ENCODE measurements at regions of chr12 and their contacts with region 1.

Region 1: GRCh38 chr12:49763006-49763591 is 21.7 kb downstream of the TMBIM6 start:
- DNase-seq: no peak
- ATAC-seq: peak; percentile 58; the same call in 1 of the 2 replicates
- H3K4me3 ChIP-seq: no peak overlapping the region
- H3K27ac ChIP-seq: no peak overlapping the region
- H3K4me1 ChIP-seq: no peaks in the 10 kb centered on the region
- H3K27me3 ChIP-seq: no peaks in the 10 kb centered on the region
- CTCF ChIP-seq: peak; percentile 90

Region 2: DNA sequence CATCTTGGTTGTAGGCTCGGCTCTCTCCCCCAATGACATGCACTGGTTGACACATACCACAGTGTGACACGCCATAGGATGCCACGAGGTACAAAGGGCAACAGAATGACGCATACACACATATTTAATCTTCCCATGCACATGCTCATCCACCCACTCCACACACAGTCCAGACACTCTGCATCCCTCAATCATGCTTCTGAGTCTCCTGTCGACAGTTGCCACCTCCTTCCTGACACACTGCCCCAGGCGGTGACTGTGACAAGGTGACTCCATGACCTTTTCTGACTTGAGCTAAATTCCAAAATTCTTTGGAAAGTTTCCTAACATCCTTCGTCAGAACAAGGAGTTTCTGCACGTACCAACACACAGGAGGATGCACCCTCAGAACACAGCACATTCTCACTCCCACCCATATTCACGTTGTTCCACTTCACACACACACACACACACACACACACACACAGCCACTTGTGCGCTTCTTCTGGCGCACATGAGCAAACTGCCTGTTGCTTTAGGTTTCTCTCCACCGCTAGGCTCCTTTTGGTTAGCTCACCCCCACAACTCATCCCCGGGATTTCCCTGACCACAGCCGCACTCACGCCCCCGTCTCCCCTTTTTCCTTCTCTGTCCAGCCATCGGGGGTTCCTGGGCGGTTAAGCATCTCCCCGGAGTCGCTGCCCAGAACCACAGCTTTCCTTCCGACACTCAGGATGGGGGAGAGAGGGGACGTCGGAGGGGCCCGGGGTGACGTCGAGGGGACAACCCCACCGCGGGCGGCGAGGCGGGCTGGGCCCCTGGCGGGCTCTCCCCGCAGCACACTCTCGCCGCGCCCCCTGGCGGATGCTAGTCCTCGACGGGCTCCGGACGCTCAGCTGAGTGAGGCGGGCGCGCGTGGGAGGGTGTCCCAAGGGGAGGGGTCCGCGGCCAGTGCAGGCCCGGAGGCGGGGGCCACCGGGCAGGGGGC is 785.5 kb before region 1 on chr12:
- CTCF ChIA-PET with region 1: no interaction called
- POLR2A ChIA-PET with region 1: interaction called, 10 read pairs
- in situ Hi-C with region 1: no loop called
- intact Hi-C with region 1: no loop called
- DNase-seq: no peak
- ATAC-seq: peak; percentile 77
- H3K4me3 ChIP-seq: peak overlapping the region; percentile 25 to 39; a peak in 2 of 4 replicates
- H3K27ac ChIP-seq: no peak overlapping the region
- H3K4me1 ChIP-seq: peaks cover 9% of the 10 kb centered on the region
- H3K27me3 ChIP-seq: peaks cover 12% of the 10 kb centered on the region
- CTCF ChIP-seq: peak; percentile 96

Region 3: DNA sequence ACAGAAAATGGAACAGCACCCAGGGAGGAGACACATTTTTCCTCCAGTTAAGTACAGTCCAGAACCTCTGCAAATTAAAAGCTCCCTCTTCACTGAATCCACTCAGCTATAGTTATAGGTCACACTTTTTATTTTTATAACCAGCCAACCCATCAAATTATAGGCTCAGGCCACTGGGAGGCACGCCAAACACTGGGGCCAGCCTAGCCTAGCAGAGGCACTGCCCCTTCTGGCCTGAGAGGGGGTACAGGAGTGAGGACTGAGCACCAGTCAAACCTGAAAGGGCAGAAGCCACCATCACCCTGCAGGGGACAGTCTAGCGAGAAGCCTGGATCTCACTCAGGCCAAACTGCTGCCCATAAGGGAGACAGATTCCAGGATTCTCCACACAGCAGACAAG is 75.2 kb before region 1 on chr12:
- CTCF ChIA-PET with region 1: no interaction called
- POLR2A ChIA-PET with region 1: no interaction called
- in situ Hi-C with region 1: no loop called
- intact Hi-C with region 1: no loop called
- DNase-seq: no peak
- ATAC-seq: peak; percentile 56; the same call in 1 of the 2 replicates
- H3K4me3 ChIP-seq: no peak overlapping the region
- H3K27ac ChIP-seq: no peak overlapping the region
- H3K4me1 ChIP-seq: no peaks in the 10 kb centered on the region
- H3K27me3 ChIP-seq: no peaks in the 10 kb centered on the region
- CTCF ChIP-seq: no peak